Testis (tissue), 5 donors: ENCODE measurements at regions of chr10 and their contacts with region 1.

Region 1: GRCh38 chr10:18214691-18215563 is 74.7 kb downstream of the CACNB2 start:
- DNase-seq: peak; percentile 72
- H3K4me3 ChIP-seq: no peak overlapping the region
- H3K27ac ChIP-seq: no peak overlapping the region
- H3K4me1 ChIP-seq: no peaks in the 10 kb centered on the region
- H3K27me3 ChIP-seq: no peaks in the 10 kb centered on the region
- CTCF ChIP-seq: peak; percentile 63 to 76 (median 75)
- POLR2A ChIP-seq: no peak

Region 2: DNA sequence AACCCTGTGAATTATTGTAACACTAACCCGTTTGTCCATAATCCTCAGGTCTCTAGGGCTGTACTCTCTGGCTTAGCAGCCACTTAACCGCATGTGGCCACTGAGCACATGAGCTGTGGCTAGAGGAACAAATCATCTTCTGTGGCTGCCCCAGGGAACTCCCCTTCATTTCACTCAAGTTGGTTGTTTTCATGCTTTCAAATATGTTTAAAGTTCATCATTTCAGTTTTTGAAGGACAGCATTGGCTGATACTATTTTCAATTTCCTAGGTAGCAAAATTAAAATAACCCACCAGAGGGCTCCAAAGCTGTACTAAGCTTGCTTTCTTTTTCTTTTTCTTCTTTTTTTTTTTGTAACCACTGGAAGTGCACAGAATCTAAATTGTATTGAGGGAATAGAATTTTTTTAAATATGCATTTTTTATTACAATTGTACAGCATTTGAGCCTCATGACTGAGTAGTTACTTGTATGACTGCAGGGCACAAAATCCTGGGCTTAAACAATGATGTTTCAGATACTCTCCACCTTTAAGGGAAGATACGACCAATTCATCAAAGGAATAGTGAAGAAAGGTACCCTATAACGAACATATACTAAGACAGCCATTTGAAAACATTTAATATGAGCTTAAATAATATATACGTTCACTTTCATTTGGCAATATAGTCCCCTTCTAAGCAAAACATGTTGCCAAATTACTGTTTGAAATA is 367.2 kb before region 1 on chr10:
- intact Hi-C with region 1: loop called (anchors 5 kb)
- DNase-seq: no peak
- H3K4me3 ChIP-seq: no peak overlapping the region
- H3K27ac ChIP-seq: no peak overlapping the region
- H3K4me1 ChIP-seq: no peaks in the 10 kb centered on the region
- H3K27me3 ChIP-seq: no peaks in the 10 kb centered on the region
- CTCF ChIP-seq: peak in 1 of 3 experiments; percentile 38
- POLR2A ChIP-seq: no peak